BJ (cell line): ENCODE measurements at regions of chr11 and their contacts with region 1.

Region 1: DNA sequence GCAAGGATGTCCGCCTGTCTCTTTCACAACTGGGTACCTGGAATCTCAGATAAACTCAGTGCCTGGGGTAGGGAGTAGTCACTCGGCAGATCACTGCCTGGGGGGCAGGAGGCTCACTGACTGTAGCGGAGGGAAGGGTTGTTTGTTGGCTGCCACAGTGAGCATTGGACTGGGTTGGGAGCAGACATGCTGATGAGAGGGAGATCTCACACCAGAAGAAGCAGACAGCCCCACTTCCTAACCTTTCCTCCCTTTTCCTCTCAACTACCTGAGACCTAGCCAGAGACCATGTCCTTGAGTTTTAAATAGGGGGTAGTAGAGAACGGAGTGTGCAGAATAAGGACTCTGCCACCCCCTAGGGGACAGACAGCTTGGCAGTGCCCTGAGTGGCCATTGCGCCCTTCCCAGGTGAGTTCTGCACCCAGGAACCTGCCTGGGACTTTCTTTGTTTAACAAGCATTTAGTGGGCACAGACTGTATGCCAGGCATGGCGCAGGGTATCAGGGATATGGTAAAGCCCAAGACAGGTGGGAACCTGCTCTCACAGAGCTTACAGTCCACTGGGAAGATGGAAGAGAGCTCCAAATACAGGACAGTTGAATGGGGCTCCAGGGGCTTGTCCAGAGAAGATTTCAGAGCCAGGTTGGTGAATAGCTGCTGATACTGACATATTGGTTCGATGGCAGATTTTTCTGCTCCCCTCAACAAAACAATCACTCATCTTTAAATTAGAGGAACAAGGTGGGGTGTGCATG is 115.7 kb upstream of the NNMT start:
- DNase-seq: no peak
- H3K4me3 ChIP-seq: no peak overlapping the region
- H3K27me3 ChIP-seq: peaks cover 39% of the 10 kb centered on the region
- CTCF ChIP-seq: peak; percentile 43

Region 2: DNA sequence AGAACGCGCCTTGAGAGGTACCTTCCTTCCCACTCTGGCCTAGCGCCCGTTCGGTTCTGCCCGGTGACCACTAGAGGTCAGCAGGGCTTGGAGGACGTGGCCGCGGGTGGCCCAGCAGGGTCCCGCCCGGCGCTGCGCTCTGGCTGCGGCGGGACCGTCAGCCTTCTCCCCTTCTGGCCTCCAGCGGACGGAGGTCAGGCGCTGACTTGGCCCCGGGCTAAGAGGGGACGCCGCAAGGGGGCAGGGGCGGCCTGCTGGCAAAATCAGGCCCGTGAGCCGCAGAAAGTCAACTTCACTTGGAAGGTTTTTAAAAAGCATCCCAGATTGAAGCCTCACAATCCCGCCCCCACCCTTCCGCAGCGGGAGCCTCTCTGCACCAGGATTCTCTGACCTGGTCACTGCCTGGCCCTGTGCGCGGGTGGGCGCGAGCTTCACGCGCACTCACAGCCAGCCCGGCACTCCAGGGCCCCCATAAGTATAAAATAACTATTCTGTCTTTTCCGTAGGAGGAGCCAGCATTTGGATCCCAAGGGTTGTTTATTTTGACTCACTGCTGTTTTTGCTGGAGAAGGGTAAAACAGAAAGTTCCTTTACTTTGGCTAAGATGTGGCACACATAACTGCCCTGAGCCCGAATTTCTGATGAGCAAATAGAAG is 144.2 kb before region 1 on chr11:
- CTCF ChIA-PET with region 1: interaction called, 31 read pairs
- POLR2A ChIA-PET with region 1: no interaction called
- DNase-seq: no peak
- H3K4me3 ChIP-seq: peak overlapping the region; percentile 24
- H3K27me3 ChIP-seq: peaks cover 6% of the 10 kb centered on the region
- CTCF ChIP-seq: peak; percentile 83

Region 3: DNA sequence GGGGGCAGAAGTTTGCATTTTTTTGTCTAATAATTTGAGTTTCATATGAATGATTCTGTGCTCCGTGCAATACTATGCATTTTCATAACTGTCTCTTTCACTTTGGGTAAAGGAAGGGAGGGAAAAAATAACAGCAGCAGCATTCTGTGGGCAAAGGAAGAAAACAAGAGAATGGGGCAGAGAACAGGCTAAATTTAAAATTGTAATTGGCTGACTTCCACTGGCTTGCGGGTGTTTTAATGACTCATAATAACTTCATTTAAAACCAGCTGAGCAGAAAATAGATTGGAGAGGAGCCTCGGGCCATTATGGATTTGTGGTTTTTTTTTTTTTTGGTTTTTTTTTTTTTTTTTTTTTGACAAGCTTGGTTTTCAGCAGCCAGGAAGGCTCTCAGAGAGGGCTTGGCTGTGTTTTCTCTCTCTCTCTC is 13.6 kb before region 1 on chr11:
- CTCF ChIA-PET with region 1: interaction called, 13 read pairs
- POLR2A ChIA-PET with region 1: no interaction called
- DNase-seq: peak; percentile 66
- H3K4me3 ChIP-seq: no peak overlapping the region
- H3K27me3 ChIP-seq: peaks cover 52% of the 10 kb centered on the region
- CTCF ChIP-seq: no peak

Region 4: DNA sequence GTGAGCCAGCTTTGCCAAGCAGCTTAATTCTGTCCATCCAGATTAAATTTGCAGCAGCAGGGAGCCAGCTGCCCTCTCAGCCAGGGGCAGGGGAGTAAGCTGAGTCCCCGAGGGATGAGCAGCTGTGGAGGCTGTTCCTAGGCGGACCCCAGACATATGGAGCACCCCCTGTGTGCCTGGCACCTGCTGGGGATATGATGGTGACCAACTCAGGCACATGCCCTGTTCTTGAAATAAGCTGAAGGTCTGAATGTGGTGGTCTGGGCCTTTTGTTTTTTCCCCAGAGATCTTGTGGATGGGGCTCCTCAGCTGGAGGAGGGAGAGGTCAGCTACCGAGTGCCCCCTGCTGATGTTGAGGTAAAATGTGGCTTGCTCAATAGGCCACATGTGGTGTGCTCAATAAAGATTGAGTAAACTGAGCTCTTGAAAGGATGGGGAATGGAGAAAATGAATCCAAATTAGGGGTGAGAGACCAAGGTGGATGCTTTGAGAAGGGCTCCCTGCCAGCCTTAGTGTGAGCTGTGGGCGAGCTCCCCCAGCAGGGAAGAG is 12.4 kb after region 1 on chr11:
- CTCF ChIA-PET with region 1: interaction called, 11 read pairs
- POLR2A ChIA-PET with region 1: no interaction called
- DNase-seq: no peak
- H3K4me3 ChIP-seq: no peak overlapping the region
- H3K27me3 ChIP-seq: peaks cover 5% of the 10 kb centered on the region
- CTCF ChIP-seq: peak; percentile 11; the same call in 1 of the 2 replicates